ENCODE measurements at regions of chr11 and their contacts with region 1.

Region 1: DNA sequence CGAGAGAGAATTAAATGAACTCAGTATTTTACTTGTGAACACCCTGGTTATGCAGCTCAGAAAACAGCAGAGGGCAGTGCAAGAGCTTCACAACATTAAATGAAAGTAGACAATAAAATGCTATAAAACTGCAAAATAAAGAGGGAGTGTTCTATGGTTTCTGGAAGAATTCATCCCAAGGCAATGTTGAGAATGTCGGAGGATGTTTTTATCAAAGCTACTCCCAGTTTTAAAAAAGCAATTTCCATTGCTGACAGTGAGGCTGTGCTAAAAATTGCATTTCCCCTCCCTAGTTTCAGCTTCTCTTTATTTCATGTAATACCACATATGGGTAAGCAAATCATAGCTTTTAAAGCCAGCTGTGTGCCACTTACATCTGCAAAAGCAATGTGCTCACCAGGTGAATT is 296.9 kb downstream of the RAB38 start:
- DNase-seq: peak; percentile 57
- H3K4me3 Mint-ChIP-seq: no peak overlapping the region
- H3K27ac Mint-ChIP-seq: no peak overlapping the region
- H3K4me1 Mint-ChIP-seq: peaks cover 6% of the 10 kb centered on the region
- H3K27me3 Mint-ChIP-seq: no peaks in the 10 kb centered on the region
- CTCF ChIP-seq: peak; percentile 56

Region 2: GRCh38 chr11:87463486-87464102 is 414.8 kb before region 1 on chr11:
- CTCF ChIA-PET with region 1: interaction called, 3 read pairs
- POLR2A ChIA-PET with region 1: no interaction called
- intact Hi-C with region 1: loop called (anchors 5 kb)
- DNase-seq: peak; percentile 65
- H3K4me3 Mint-ChIP-seq: no peak overlapping the region
- H3K27ac Mint-ChIP-seq: no peak overlapping the region
- H3K4me1 Mint-ChIP-seq: no peaks in the 10 kb centered on the region
- H3K27me3 Mint-ChIP-seq: no peaks in the 10 kb centered on the region
- CTCF ChIP-seq: peak; percentile 61

Region 3: GRCh38 chr11:87722756-87723565 is 155.4 kb before region 1 on chr11:
- CTCF ChIA-PET with region 1: interaction called, 10 read pairs
- POLR2A ChIA-PET with region 1: no interaction called
- intact Hi-C with region 1: no loop called
- DNase-seq: peak; percentile 43
- H3K4me3 Mint-ChIP-seq: no peak overlapping the region
- H3K27ac Mint-ChIP-seq: no peak overlapping the region
- H3K4me1 Mint-ChIP-seq: peaks cover 11% of the 10 kb centered on the region
- H3K27me3 Mint-ChIP-seq: peaks cover 12% of the 10 kb centered on the region
- CTCF ChIP-seq: peak; percentile 84

Region 4: GRCh38 chr11:87894961-87895360 is 16.6 kb after region 1 on chr11:
- CTCF ChIA-PET with region 1: interaction called, 14 read pairs
- POLR2A ChIA-PET with region 1: interaction called, 3 read pairs
- intact Hi-C with region 1: no loop called
- DNase-seq: no peak
- H3K4me3 Mint-ChIP-seq: no peak overlapping the region
- H3K27ac Mint-ChIP-seq: no peak overlapping the region
- H3K4me1 Mint-ChIP-seq: no peaks in the 10 kb centered on the region
- H3K27me3 Mint-ChIP-seq: no peaks in the 10 kb centered on the region
- CTCF ChIP-seq: no peak

Region 5: GRCh38 chr11:87926250-87926970 is 48.0 kb after region 1 on chr11:
- CTCF ChIA-PET with region 1: no interaction called
- POLR2A ChIA-PET with region 1: no interaction called
- intact Hi-C with region 1: loop called (anchors 1 kb)
- DNase-seq: peak; percentile 85
- H3K4me3 Mint-ChIP-seq: no peak overlapping the region
- H3K27ac Mint-ChIP-seq: peak overlapping the region; percentile 24
- H3K4me1 Mint-ChIP-seq: peaks cover 6% of the 10 kb centered on the region
- H3K27me3 Mint-ChIP-seq: no peaks in the 10 kb centered on the region
- CTCF ChIP-seq: no peak

Region 6: DNA sequence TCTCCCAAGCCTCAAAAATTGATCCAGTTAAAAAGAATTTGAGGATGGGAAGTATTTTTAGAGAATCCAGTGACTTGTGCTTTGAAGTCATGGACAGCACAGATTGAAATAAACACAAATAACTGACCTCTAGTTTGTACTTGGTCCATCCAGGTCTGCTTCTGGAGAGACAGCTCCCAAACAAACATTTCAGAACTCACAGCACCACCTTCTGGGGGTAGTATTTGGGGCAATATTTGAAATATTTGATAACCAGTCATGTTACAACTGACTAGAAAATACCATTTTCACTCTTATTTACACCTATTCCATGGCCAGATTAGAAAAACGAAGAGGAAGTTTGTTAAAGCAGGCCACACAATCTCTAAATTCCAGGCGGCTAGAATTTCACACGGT is 402.9 kb after region 1 on chr11:
- CTCF ChIA-PET with region 1: interaction called, 5 read pairs
- POLR2A ChIA-PET with region 1: no interaction called
- intact Hi-C with region 1: loop called (anchors 1 kb)
- DNase-seq: peak; percentile 33
- H3K4me3 Mint-ChIP-seq: no peak overlapping the region
- H3K27ac Mint-ChIP-seq: no peak overlapping the region
- H3K4me1 Mint-ChIP-seq: peaks cover 7% of the 10 kb centered on the region
- H3K27me3 Mint-ChIP-seq: no peaks in the 10 kb centered on the region
- CTCF ChIP-seq: peak; percentile 28

Region 7: GRCh38 chr11:88886796-88887195 is 1008.4 kb after region 1 on chr11:
- CTCF ChIA-PET with region 1: interaction called, 5 read pairs
- POLR2A ChIA-PET with region 1: no interaction called
- intact Hi-C with region 1: loop called (anchors 1 kb)
- DNase-seq: peak; percentile 82
- H3K4me3 Mint-ChIP-seq: no peak overlapping the region
- H3K27ac Mint-ChIP-seq: no peak overlapping the region
- H3K4me1 Mint-ChIP-seq: no peaks in the 10 kb centered on the region
- H3K27me3 Mint-ChIP-seq: no peaks in the 10 kb centered on the region
- CTCF ChIP-seq: peak; percentile 70